BJ (cell line): ENCODE measurements at regions of chr2 and their contacts with region 1.

Region 1: DNA sequence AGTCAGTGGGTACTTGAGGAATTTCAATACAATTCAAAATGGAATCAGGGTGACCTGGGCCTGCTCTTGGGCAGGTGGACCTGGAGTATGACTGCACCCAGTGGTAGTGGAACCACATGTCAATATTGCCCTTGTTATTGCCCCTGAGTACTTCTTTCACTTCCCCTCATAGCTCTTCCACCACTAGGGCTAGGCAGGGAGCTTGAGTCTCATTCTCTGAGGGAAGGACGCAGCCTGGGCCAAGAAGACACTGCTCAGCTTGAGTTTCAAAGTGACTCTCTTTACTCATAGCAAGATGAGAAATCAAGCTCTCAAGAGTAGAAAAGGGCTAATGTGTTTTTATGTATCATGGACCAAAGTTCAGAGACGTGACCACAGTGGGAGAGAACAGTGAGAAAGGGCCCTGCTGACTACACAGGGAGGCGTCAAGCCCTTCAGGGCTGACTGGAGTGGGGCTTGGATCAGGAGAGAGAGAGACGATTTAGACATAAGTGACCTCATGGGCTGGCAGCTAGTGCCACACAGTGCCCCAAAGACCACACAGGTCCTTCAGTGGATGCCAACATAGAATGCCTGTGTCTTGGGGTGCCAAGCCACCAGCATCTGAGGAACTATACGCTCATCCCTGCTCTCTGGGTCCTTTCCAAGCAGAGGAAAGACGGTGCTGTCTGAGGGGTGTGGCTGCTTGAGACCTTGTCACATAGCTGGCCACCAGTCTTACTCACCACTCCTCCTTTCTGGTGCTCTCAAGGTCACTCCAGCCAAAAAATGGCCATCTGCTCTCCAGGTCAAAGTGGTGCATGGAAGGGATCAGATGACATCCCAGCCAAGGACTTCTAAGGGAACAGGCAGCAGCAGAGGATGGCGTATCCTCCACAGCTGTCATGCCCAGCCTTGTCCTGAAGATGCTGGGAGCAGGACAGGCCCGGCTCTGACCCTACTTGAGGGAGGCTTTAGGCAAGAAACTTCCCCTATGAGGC is 13.0 kb downstream of the PTMA start:
- DNase-seq: no peak
- H3K4me3 ChIP-seq: no peak overlapping the region
- H3K27me3 ChIP-seq: no peaks in the 10 kb centered on the region
- CTCF ChIP-seq: no peak

Region 2: DNA sequence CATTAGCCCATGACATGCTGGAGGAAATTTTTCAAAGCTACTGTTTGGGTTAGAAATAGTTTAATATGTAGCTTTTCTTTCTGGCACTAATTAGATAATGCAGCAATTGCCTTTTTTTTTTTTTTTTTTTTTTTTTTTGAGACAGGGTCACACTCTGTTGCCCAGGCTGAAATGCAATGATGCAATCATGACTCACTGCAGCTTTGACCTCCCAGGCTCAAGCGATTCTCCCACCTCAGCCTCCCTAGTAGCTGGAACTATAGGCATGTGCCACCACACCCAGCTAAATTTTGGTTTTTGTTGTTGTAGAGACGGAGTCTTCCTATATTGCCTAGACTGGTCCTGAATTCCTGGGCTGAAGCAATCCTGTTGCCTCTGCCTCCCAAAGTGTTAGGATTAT is 1169.1 kb before region 1 on chr2:
- CTCF ChIA-PET with region 1: no interaction called
- POLR2A ChIA-PET with region 1: interaction called, 35 read pairs
- DNase-seq: no peak
- H3K4me3 ChIP-seq: no peak overlapping the region
- H3K27me3 ChIP-seq: peaks cover 1% of the 10 kb centered on the region; the same call in 1 of the 2 replicates
- CTCF ChIP-seq: no peak

Region 3: GRCh38 chr2:232013701-232014353 is 292.6 kb after region 1 on chr2:
- CTCF ChIA-PET with region 1: no interaction called
- POLR2A ChIA-PET with region 1: no interaction called
- DNase-seq: peak; percentile 85
- H3K4me3 ChIP-seq: no peak overlapping the region
- H3K27me3 ChIP-seq: no peaks in the 10 kb centered on the region
- CTCF ChIP-seq: no peak

Region 4: DNA sequence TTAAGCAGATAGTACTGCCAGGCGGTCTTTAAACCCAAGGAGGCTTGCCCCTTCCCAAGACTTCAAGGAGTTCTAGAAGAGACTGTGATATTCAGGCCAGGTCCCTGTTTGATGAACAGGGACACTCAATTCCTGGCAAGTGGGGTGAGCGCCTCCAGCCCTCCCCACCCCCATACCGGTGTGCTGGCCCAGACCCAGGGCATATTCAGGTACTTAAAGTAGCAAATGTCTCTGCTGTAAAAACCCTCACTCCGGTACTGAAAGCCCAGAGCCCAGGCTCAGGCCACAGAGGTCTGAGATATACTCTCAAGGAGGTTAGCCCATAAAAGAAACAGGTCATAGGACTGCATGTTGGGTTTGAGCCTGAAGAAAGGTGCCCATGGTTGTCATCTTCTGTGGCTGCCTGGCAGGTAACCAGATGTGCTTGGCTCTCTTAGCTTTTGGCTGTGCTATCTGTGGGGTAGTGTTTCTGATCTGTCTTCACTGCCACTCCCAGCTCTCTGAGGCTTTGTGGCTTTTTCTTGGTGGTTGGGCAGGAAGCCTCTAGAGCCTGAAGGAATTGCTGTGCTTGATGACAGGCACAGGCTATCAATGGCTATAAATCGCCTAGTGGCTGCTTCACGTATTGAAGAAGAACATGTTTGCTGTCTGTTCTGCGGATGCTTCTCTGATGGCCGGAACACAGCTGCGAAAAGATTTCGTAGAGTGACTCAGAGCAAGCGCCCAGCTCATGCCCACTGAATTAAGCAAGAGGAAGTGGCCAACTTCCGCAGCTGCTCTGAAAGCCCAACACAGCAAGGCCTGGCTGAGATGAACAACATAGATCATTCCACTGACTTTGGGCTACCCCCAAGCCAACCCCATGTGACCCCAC is 594.0 kb after region 1 on chr2:
- CTCF ChIA-PET with region 1: no interaction called
- POLR2A ChIA-PET with region 1: no interaction called
- DNase-seq: peak; percentile 52
- H3K4me3 ChIP-seq: no peak overlapping the region
- H3K27me3 ChIP-seq: no peaks in the 10 kb centered on the region
- CTCF ChIP-seq: 0 out of 2 replicates have a peak, but pooled peaks have one; percentile 11